Caki2 (cell line): ENCODE measurements at regions of chr5 and their contacts with region 1.

Region 1: DNA sequence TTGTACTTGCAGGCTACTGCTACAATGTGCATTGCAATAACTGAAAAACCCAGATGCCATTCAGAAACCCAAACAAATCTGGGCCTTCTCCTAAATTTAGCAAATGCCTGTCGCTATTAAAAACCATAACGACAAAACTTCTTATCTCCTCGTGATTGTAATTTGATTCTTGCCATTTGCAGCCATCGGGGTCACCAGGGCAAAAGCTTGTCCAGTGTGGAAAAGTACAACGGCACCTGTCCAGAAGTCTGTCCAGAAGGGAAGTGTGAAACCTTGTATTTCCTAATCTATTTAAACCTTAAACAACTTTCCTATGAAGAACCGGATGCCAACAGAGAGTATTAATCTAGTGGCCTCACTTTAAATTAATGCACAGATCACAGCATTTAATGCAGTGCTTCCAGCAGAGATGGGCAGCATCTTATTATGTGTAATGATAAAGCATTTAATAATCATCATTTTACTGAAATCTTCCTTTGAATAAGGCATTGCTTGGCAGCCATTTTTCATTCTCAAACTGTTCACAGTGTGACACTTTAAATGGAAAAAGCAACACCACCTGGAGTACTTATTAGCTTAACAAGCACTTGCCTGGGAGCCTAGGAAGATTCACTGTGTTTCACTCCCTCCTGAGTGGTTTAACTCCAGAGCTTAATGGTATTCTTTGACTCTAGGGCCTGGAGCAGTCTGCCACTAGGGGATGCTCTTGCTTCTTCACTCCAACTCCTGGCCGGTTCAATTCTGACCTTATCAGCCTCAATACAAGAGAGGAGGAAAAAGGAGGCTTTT is 4.9 kb upstream of the C7 start:
- DNase-seq: peak; percentile 73

Region 2: GRCh38 chr5:41115281-41115680 is 210.9 kb after region 1 on chr5:
- in situ Hi-C with region 1: loop called (anchors 25 kb)
- DNase-seq: no peak